Adrenal gland (tissue), 19 donors: ENCODE measurements at regions of chr18 and their contacts with region 1.

Region 1: GRCh38 chr18:28065031-28065792 is 111.7 kb downstream of the CDH2 start:
- DNase-seq: peak in 1 of 7 donors; percentile 26
- H3K4me3 ChIP-seq: no peak overlapping the region
- H3K27ac ChIP-seq: peak overlapping the region in 2 of 5 donors; percentile 22 to 38
- H3K4me1 ChIP-seq: peaks cover 7 to 14% of the 10 kb centered on the region in 2 donors
- H3K27me3 ChIP-seq: no peaks in the 10 kb centered on the region
- CTCF ChIP-seq: no peak
- POLR2A ChIP-seq: no peak

Region 2: GRCh38 chr18:28013066-28013465 is 52.1 kb before region 1 on chr18:
- intact Hi-C with region 1: no loop called
- DNase-seq: no peak
- H3K4me3 ChIP-seq: no peak overlapping the region
- H3K27ac ChIP-seq: no peak overlapping the region
- H3K4me1 ChIP-seq: no peaks in the 10 kb centered on the region
- H3K27me3 ChIP-seq: no peaks in the 10 kb centered on the region
- CTCF ChIP-seq: peak; percentile 14 to 55 (median 40)
- POLR2A ChIP-seq: no peak

Region 3: GRCh38 chr18:28127763-28128663 is 62.8 kb after region 1 on chr18:
- intact Hi-C with region 1: loop called in 1 of 2 experiments (anchors 10 kb)
- DNase-seq: peak in 6 of 7 donors; percentile 31 to 65 (median 40)
- H3K4me3 ChIP-seq: no peak overlapping the region
- H3K27ac ChIP-seq: peak overlapping the region in 2 of 5 donors; percentile 9 to 11
- H3K4me1 ChIP-seq: peaks cover 18 to 62% of the 10 kb centered on the region in 2 donors
- H3K27me3 ChIP-seq: no peaks in the 10 kb centered on the region
- CTCF ChIP-seq: no peak
- POLR2A ChIP-seq: no peak

Region 4: DNA sequence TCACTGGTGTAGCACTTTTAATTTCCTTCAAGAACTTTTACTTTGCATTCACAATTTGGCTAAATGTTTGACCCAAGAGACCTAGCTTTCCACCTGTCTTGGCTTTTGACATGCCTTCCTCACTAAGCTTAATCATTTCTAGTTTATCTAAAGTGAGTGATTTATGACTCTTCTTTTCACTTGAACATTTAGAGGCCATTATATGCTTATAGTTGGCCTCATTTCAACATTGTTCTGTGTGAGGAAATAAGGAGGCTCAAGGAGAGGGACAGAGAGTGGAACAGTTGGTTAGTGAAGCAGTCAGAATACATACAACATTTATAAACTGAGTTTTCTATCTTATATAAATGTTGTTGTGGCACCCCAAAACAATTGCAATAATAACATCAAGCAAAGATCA is 601.0 kb after region 1 on chr18:
- intact Hi-C with region 1: no loop called
- DNase-seq: no peak
- H3K4me3 ChIP-seq: no peak overlapping the region
- H3K27ac ChIP-seq: no peak overlapping the region
- H3K4me1 ChIP-seq: no peaks in the 10 kb centered on the region
- H3K27me3 ChIP-seq: no peaks in the 10 kb centered on the region
- CTCF ChIP-seq: no peak
- POLR2A ChIP-seq: no peak

Region 5: GRCh38 chr18:29855637-29856036 is 1790.4 kb after region 1 on chr18:
- intact Hi-C with region 1: no loop called
- DNase-seq: no peak
- H3K4me3 ChIP-seq: no peak overlapping the region
- H3K27ac ChIP-seq: no peak overlapping the region
- H3K4me1 ChIP-seq: no peaks in the 10 kb centered on the region
- H3K27me3 ChIP-seq: no peaks in the 10 kb centered on the region
- CTCF ChIP-seq: no peak
- POLR2A ChIP-seq: no peak